ENCODE measurements at regions of chr9 and their contacts with region 1.

Region 1: GRCh38 chr9:136742591-136743391 is at the start of gene LCN10:
- DNase-seq: peak; percentile 80
- H3K4me3 ChIP-seq: no peak within 1 kb of the TSS
- H3K27ac ChIP-seq: no peak within 1 kb of the TSS
- H3K4me1 ChIP-seq: peaks cover 0 to 5% of the 10 kb centered on the region in 2 experiments; a peak in 1 of 4 replicates
- H3K27me3 ChIP-seq: no peaks in the 10 kb centered on the region
- CTCF ChIP-seq: peak; percentile 42
- EP300 ChIP-seq: no peak
- RAD21 ChIP-seq: no peak
- polyA plus RNA-seq, gene LCN10: not detected in 2 replicates

Region 2: DNA sequence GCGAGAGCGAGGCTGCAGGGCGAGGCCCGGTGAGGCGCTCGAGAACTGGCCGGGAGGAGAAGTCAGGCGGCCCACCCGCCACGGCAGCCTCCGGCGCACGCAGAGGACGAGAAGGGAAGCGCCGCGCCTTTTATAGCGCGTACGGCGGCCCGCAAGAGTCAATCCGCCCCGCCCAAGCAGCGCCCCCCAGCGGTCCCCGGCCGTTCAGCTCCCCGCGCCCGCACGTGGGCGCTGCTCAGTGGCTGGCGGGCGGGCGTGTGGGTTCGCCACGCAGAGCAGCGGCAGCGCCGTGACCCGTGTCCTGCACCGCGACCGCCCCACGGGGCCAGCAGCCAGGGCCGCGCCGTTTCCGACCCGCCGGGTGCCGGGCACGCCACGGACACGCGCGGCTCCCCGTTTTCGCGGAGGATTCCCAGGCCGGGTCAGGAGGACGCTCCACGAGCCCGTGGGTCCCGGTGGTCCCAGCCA is 14.7 kb before region 1 on chr9:
- CTCF ChIA-PET with region 1: interaction called, 34 read pairs
- POLR2A ChIA-PET with region 1: interaction called, 4 read pairs
- DNase-seq: peak; percentile 98
- H3K4me3 ChIP-seq: peak overlapping the region; percentile 83 to 85
- H3K27ac ChIP-seq: peak overlapping the region in 1 of 2 experiments; percentile 63; a peak in 2 of 4 replicates
- H3K4me1 ChIP-seq: peaks cover 12 to 25% of the 10 kb centered on the region in 2 experiments; a peak in 2 of 4 replicates
- H3K27me3 ChIP-seq: no peaks in the 10 kb centered on the region
- CTCF ChIP-seq: peak; percentile 75
- EP300 ChIP-seq: peak in 1 of 2 experiments; percentile 49; a peak in 1 of 4 replicates
- RAD21 ChIP-seq: no peak

Region 3: GRCh38 chr9:136762915-136763648 is 20.3 kb after region 1 on chr9:
- CTCF ChIA-PET with region 1: interaction called, 19 read pairs
- POLR2A ChIA-PET with region 1: no interaction called
- DNase-seq: peak; percentile 96
- H3K4me3 ChIP-seq: no peak overlapping the region
- H3K27ac ChIP-seq: no peak overlapping the region
- H3K4me1 ChIP-seq: peaks cover 0 to 13% of the 10 kb centered on the region in 2 experiments; a peak in 1 of 4 replicates
- H3K27me3 ChIP-seq: no peaks in the 10 kb centered on the region; the same call in 1 of the 2 replicates
- CTCF ChIP-seq: no peak
- EP300 ChIP-seq: no peak
- RAD21 ChIP-seq: no peak

Measured in SK-N-SH (cell line).